ENCODE measurements at regions of chr18 and their contacts with region 1.

Region 1: DNA sequence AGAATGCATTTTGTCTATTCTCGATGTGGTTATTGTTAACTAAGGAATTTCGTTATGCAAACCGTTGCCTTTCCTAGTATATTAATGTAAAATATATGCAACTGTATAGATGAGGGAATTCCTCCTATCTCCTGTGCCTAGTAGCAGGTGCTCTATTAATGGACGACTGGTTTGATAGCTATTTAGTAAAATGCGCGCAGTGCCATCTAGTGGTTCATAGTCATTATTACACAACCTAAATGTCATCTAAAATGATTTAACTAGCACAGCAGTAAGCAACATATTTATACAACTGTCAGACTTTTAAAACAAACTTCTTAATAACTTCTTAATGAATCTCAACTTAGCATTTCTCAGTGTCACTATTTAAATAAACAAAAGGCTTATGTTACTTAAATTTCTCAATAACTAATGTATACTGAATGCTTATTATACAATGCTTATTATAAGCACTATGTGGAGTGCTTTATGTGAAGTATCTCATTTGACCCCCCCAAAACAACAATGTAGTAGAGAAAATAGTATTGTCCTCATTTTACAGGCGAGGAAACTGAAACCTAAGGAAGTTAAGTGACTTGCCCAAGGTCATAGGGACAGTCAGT is 77.9 kb downstream of the DTNA start:
- DNase-seq: peak; percentile 72
- H3K4me3 Mint-ChIP-seq: no peak overlapping the region
- H3K27ac Mint-ChIP-seq: no peak overlapping the region
- H3K4me1 Mint-ChIP-seq: no peaks in the 10 kb centered on the region
- H3K27me3 Mint-ChIP-seq: peaks cover 12% of the 10 kb centered on the region
- CTCF ChIP-seq: peak; percentile 64

Region 2: DNA sequence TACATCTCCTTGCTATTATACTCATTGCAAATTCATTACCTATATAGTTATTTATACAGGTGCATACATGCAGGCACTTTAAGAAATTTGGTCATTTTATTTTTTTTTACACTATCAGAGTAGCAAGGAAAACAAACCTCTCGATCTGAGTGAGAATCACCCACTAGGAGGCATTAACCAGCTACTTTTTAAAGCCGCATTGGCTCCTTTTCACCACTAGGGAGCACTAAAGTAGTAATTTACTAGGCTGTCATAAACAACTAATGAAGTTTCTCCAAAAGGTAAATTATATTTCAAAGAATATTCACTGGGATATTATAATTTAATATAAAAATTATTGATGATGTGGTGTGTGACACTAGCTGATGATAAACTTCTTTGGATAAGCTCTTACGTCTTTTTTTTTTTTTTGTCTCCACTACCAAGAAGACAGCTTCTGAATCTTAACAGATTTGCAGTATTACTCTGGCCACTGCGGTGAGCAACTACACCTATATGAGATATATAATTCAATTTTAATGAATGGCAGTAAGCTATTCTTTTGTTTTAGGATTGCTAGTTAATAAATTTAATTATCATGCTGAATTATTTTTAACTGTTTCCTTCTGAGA is 665.2 kb before region 1 on chr18:
- CTCF ChIA-PET with region 1: interaction called, 15 read pairs
- POLR2A ChIA-PET with region 1: no interaction called
- intact Hi-C with region 1: loop called (anchors 1 kb)
- DNase-seq: peak; percentile 63
- H3K4me3 Mint-ChIP-seq: no peak overlapping the region
- H3K27ac Mint-ChIP-seq: no peak overlapping the region
- H3K4me1 Mint-ChIP-seq: peaks cover 5% of the 10 kb centered on the region
- H3K27me3 Mint-ChIP-seq: no peaks in the 10 kb centered on the region
- CTCF ChIP-seq: peak; percentile 76

Region 3: GRCh38 chr18:34592961-34593382 is 195.1 kb before region 1 on chr18:
- CTCF ChIA-PET with region 1: interaction called, 39 read pairs
- POLR2A ChIA-PET with region 1: no interaction called
- intact Hi-C with region 1: loop called (anchors 1 kb)
- DNase-seq: peak; percentile 9
- H3K4me3 Mint-ChIP-seq: peak overlapping the region; percentile 35
- H3K27ac Mint-ChIP-seq: no peak overlapping the region
- H3K4me1 Mint-ChIP-seq: no peaks in the 10 kb centered on the region
- H3K27me3 Mint-ChIP-seq: peaks cover 46% of the 10 kb centered on the region
- CTCF ChIP-seq: no peak

Region 4: DNA sequence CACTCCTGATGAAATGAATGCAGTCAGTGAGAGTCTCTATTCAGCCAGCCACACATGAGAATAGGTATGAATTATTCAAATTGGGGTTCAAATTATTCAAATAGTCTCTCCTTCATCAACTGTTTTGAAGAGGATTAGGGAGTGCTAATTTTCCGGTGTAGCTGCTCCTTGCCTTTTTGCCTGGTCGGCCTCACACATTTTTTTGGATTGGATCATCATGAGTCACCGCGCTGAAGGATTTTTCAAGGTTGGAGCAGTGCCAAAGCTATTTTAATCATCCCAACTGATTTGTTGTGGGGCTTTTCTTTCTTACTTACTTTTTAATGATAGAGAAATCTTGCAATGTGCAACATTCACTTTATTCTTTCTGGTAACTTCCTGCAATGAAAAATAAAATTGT is 80.4 kb before region 1 on chr18:
- CTCF ChIA-PET with region 1: interaction called, 4 read pairs
- POLR2A ChIA-PET with region 1: no interaction called
- intact Hi-C with region 1: loop called (anchors 5 kb)
- DNase-seq: peak; percentile 95
- H3K4me3 Mint-ChIP-seq: no peak overlapping the region
- H3K27ac Mint-ChIP-seq: peak overlapping the region; percentile 29
- H3K4me1 Mint-ChIP-seq: peaks cover 19% of the 10 kb centered on the region
- H3K27me3 Mint-ChIP-seq: no peaks in the 10 kb centered on the region
- CTCF ChIP-seq: no peak

Region 5: GRCh38 chr18:34729264-34729663 is 58.8 kb before region 1 on chr18:
- CTCF ChIA-PET with region 1: interaction called, 7 read pairs
- POLR2A ChIA-PET with region 1: no interaction called
- intact Hi-C with region 1: loop called (anchors 1 kb)
- DNase-seq: peak; percentile 57
- H3K4me3 Mint-ChIP-seq: no peak overlapping the region
- H3K27ac Mint-ChIP-seq: no peak overlapping the region
- H3K4me1 Mint-ChIP-seq: peaks cover 7% of the 10 kb centered on the region
- H3K27me3 Mint-ChIP-seq: no peaks in the 10 kb centered on the region
- CTCF ChIP-seq: peak; percentile 64